Esophagus squamous epithelium (tissue), 5 donors: ENCODE measurements at regions of chr1 and their contacts with region 1.

Region 1: GRCh38 chr1:7902478-7903085 is 38.1 kb downstream of the TNFRSF9 start:
- DNase-seq: no peak
- H3K4me3 ChIP-seq: peak overlapping the region in 2 of 4 donors; percentile 8 to 53
- H3K27ac ChIP-seq: no peak overlapping the region
- H3K4me1 ChIP-seq: peaks cover 0 to 5% (median 0%) of the 10 kb centered on the region in 3 donors
- H3K27me3 ChIP-seq: no peaks in the 10 kb centered on the region
- CTCF ChIP-seq: peak; percentile 53 to 70 (median 66)
- POLR2A ChIP-seq: no peak

Region 2: DNA sequence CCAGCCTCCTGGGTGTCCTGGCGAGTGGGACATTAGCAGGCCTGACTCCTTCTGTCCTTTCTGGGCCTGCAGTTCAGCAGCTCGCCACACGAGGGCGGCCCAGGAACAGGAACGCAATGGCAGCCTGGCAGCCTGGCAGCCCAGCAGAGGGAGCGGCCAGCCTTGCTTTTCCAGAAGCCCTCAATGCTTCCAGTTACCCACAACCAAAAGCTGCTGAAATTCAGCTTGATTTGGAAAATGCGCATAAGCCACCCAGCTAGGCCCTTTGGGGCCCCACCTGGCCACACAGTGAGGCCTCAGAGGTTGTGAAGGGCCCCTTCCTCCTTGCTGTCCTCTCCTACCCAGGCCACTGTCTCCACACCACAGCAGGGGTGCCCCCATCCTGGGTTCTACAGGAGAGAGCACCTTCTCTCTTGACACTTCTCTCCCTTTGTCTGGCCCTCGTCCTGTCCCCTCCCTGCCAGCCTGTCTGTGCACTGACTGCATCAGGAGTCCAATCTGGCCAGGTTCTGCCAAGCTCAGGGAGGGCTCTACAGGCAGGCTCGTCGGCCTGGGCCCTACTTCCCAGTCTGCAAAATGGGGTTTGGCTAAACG is 234.9 kb before region 1 on chr1:
- intact Hi-C with region 1: loop called (anchors 10 kb)
- DNase-seq: no peak
- H3K4me3 ChIP-seq: no peak overlapping the region
- H3K27ac ChIP-seq: no peak overlapping the region
- H3K4me1 ChIP-seq: peaks cover 0 to 24% (median 9%) of the 10 kb centered on the region in 3 donors
- H3K27me3 ChIP-seq: peaks cover 0 to 21% (median 0%) of the 10 kb centered on the region in 4 donors
- CTCF ChIP-seq: peak; percentile 96 to 100 (median 100)
- POLR2A ChIP-seq: no peak

Region 3: GRCh38 chr1:7810395-7810794 is 92.2 kb before region 1 on chr1:
- intact Hi-C with region 1: loop called (anchors 10 kb)
- DNase-seq: no peak
- H3K4me3 ChIP-seq: no peak overlapping the region
- H3K27ac ChIP-seq: no peak overlapping the region
- H3K4me1 ChIP-seq: no peaks in the 10 kb centered on the region
- H3K27me3 ChIP-seq: no peaks in the 10 kb centered on the region
- CTCF ChIP-seq: no peak
- POLR2A ChIP-seq: no peak

Region 4: DNA sequence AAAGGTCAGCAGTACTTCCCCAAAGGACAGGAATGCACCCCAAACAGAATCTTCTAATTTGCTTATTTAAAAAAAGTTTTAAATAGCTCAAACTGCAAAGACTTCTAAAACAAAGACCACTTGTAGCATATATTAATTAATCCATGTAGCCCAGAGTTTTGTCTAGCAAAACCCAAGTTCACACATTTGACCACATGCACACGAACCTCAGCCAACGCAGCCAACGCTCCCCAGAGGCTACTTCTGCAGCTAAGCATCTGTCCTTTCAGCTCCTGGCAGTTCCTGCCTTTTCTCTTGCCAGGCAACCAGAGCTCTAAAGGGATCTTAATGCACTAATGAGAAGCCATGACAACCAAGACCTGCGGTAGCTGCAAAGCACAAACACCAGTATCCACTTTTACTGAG is 825.2 kb after region 1 on chr1:
- intact Hi-C with region 1: no loop called
- DNase-seq: no peak
- H3K4me3 ChIP-seq: no peak overlapping the region
- H3K27ac ChIP-seq: no peak overlapping the region
- H3K4me1 ChIP-seq: peaks cover 0 to 21% (median 5%) of the 10 kb centered on the region in 3 donors
- H3K27me3 ChIP-seq: no peaks in the 10 kb centered on the region
- CTCF ChIP-seq: no peak
- POLR2A ChIP-seq: no peak